GM12878 (cell line): ENCODE measurements at regions of chr13 and their contacts with region 1.

Region 1: DNA sequence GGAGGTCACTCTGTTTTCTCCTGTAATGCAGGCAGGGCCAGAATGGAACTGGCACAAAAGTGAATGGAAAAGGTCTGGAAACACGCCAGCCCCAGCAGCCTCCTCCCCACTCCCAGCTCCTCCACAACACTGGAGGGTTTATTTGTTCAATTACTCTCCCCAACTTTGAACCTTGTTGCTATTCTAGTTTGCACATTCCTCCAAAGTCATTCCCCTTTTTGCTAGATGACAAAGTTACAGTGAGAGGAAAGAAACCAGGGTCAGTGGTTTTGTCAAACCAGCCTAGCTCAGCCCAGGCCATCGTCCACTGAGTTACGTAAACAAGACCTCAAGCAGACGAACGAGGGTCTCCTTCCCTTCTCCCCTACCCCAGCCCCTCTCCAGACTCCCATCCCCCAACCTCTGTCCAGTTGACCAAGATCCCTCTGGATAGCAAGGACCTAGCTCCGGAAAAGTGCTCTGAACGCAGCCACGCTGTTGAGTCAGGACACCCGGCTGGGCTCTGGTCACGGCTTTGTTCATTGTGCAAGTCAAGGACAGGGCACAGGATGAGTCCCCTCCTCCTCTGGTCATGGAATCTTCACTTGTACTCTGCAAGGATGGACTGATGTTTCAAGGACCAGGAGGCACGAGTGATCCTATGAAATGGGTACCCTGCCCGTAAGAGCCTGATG is 180.0 kb downstream of the USP12 start:
- DNase-seq: no peak
- ATAC-seq: no peak
- H3K4me3 ChIP-seq: no peak overlapping the region
- H3K27ac ChIP-seq: no peak overlapping the region
- H3K4me1 ChIP-seq: no peaks in the 10 kb centered on the region
- H3K27me3 ChIP-seq: no peaks in the 10 kb centered on the region
- CTCF ChIP-seq: no peak
- EP300 ChIP-seq: no peak
- POLR2A ChIP-seq: no peak
- RAD21 ChIP-seq: no peak

Region 2: DNA sequence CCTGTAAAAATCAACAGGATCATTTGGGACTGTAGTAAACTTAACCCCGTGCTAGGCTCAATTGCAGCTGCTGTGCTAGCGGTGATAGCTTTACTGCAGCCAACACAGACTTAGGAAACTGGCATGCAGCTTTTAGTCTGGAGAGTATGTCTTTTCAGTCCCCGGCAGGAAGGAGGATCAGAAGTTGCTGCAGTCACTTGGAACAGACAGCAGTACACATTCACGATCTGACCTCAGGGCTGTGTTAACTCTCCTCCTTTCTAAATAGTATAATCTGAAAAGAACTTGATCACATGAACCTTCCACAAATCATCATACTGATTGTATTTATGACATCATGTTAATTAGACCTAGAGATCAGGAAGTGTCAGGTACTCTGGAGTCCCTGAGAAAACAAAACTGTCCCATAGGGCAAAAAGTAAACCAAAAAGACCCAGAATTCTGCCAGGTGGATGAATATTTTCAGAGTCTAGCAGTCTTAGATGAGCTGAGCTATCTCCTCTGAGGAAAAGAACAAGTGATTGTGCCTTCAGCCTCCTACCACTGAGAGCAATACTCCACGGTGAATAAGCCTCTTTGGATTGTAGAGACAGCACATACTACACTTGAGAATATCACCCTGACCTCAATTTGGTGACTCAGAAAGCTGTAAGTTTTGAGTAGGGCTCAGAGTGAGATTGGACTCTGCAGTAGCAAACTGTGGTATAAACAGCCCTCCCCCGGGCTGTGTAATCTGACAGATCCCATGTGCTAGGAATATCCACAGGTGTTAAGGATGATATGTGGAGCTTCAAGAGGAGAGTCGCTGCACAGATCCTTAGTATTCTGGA is 50.1 kb before region 1 on chr13:
- CTCF ChIA-PET with region 1: interaction called, 7 read pairs
- POLR2A ChIA-PET with region 1: no interaction called
- RAD21 ChIA-PET with region 1: interaction called, 3 read pairs
- SMC1A ChIA-PET with region 1: interaction called, 5 read pairs
- in situ Hi-C with region 1: loop called (anchors 5 kb)
- intact Hi-C with region 1: no loop called
- DNase-seq: no peak
- ATAC-seq: peak; percentile 22; the same call in 1 of the 3 replicates
- H3K4me3 ChIP-seq: no peak overlapping the region
- H3K27ac ChIP-seq: no peak overlapping the region
- H3K4me1 ChIP-seq: no peaks in the 10 kb centered on the region
- H3K27me3 ChIP-seq: peaks cover 0 to 5% of the 10 kb centered on the region in 2 experiments; a peak in 1 of 4 replicates
- CTCF ChIP-seq: no peak
- EP300 ChIP-seq: no peak
- POLR2A ChIP-seq: no peak
- RAD21 ChIP-seq: no peak

Region 3: GRCh38 chr13:27194895-27195764 is 203.5 kb after region 1 on chr13:
- CTCF ChIA-PET with region 1: no interaction called
- POLR2A ChIA-PET with region 1: no interaction called
- RAD21 ChIA-PET with region 1: no interaction called
- SMC1A ChIA-PET with region 1: no interaction called
- in situ Hi-C with region 1: no loop called
- intact Hi-C with region 1: no loop called
- DNase-seq: no peak
- ATAC-seq: peak; percentile 48
- H3K4me3 ChIP-seq: no peak overlapping the region
- H3K27ac ChIP-seq: no peak overlapping the region
- H3K4me1 ChIP-seq: no peaks in the 10 kb centered on the region
- H3K27me3 ChIP-seq: no peaks in the 10 kb centered on the region
- CTCF ChIP-seq: no peak
- EP300 ChIP-seq: no peak
- POLR2A ChIP-seq: no peak
- RAD21 ChIP-seq: no peak